CD8-positive, alpha-beta T cell (primary cell): ENCODE measurements at regions of chr11 and their contacts with region 1.

Region 1: GRCh38 chr11:95100856-95101507 is 11.3 kb downstream of the ENDOD1 start:
- DNase-seq: no peak
- ATAC-seq: no peak
- H3K4me3 ChIP-seq: no peak overlapping the region
- H3K4me3 Mint-ChIP-seq: no peak overlapping the region
- H3K27ac ChIP-seq: no peak overlapping the region
- H3K27ac Mint-ChIP-seq: no peak overlapping the region
- H3K4me1 ChIP-seq: no peaks in the 10 kb centered on the region
- H3K4me1 Mint-ChIP-seq: peaks cover 16% of the 10 kb centered on the region
- H3K27me3 ChIP-seq: no peaks in the 10 kb centered on the region
- H3K27me3 Mint-ChIP-seq: no peaks in the 10 kb centered on the region
- CTCF ChIP-seq: no peak

Region 2: DNA sequence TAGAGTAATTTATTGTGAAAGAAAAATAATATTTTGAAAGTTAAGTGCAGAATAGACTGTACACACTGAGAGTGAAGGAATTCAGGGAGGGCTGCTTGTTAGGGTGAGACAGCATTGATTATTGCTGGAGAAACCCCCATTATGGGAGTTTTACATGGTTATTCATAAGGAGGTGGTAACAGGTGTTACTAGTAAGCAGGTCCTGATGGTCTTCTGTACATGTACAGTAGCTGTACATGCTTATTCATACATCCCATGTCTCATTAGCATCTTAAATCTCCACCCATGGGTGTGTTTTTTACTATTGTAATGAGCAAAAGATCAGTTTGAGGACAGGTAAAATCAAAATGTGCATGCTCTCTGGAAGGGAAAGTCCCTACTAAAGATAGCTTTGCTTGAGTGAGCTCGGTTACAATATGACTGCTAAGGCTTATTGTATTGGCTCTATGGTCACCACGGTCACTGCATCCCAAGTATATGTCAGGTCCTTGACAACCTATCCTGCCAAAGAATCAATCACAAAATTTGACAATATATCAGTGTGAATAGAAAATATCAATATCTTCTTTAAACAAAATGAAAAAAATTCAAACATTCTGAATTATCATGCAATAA is 45.6 kb before region 1 on chr11:
- CTCF ChIA-PET with region 1: no interaction called
- POLR2A ChIA-PET with region 1: no interaction called
- intact Hi-C with region 1: no loop called
- DNase-seq: no peak
- ATAC-seq: no peak
- H3K4me3 ChIP-seq: no peak overlapping the region
- H3K4me3 Mint-ChIP-seq: no peak overlapping the region
- H3K27ac ChIP-seq: no peak overlapping the region
- H3K27ac Mint-ChIP-seq: no peak overlapping the region
- H3K4me1 ChIP-seq: no peaks in the 10 kb centered on the region
- H3K4me1 Mint-ChIP-seq: no peaks in the 10 kb centered on the region
- H3K27me3 ChIP-seq: no peaks in the 10 kb centered on the region
- H3K27me3 Mint-ChIP-seq: peaks cover 46% of the 10 kb centered on the region
- CTCF ChIP-seq: no peak

Region 3: DNA sequence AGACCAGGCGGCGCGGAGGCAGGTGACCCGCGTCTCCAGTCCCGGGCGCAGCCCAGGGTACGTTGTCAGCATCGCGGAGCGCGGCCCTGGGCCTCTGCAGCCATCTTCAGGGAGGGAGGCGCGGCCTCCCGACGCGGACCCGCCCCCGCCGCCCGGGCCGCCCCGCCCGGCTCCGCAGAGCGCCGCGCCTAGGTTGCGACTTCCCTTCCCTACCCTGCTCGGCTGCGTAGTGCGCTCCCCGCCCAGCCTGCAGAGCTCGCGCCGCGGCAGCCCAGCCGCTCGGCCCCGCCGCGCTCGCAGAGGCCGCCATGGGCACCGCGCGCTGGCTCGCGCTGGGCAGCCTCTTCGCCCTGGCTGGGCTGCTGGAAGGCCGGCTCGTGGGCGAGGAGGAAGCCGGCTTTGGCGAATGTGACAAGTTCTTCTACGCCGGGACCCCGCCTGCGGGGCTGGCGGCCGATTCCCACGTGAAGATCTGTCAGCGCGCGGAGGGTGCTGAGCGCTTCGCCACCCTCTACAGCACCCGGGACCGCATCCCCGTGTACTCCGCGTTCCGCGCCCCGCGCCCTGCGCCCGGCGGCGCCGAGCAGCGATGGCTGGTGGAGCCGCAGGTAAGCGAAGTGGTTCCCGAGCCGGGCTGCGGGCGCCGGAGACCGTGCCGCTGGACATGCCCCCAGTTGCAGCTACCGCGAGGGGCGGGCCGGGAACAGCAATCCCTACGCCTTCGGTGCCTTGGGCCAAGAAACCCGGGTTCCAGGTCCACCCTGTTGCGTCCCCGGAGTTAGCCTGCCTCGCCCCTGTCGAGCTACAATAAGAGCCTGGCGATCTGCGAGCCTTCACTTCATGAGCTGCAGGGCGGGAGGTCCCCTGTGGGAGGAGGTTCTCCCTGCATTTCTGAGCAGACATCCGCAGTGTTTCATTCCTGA is 11.1 kb before region 1 on chr11 and contains the start of gene ENDOD1:
- CTCF ChIA-PET with region 1: interaction called, 4 read pairs
- POLR2A ChIA-PET with region 1: interaction called, 15 read pairs
- intact Hi-C with region 1: no loop called
- DNase-seq: peak; percentile 75 to 92 (median 83)
- ATAC-seq: peak; percentile 94
- H3K4me3 ChIP-seq: peak within 1 kb of the TSS; percentile 66 to 78
- H3K4me3 Mint-ChIP-seq: peak within 1 kb of the TSS; percentile 93
- H3K27ac ChIP-seq: peak within 1 kb of the TSS; percentile 77 to 84
- H3K27ac Mint-ChIP-seq: peak within 1 kb of the TSS; percentile 99
- H3K4me1 ChIP-seq: peaks cover 25% of the 10 kb centered on the region
- H3K4me1 Mint-ChIP-seq: peaks cover 50% of the 10 kb centered on the region
- H3K27me3 ChIP-seq: no peaks in the 10 kb centered on the region
- H3K27me3 Mint-ChIP-seq: no peaks in the 10 kb centered on the region
- CTCF ChIP-seq: no peak
- total RNA-seq, gene ENDOD1: 5.6 to 5.9 TPM